Dorsolateral prefrontal cortex (tissue), 120 donors: ENCODE measurements at regions of chr1 and their contacts with region 1.

Region 1: GRCh38 chr1:119870917-119871596 is 25.3 kb downstream of the ADAM30 start:
- DNase-seq: peak; percentile 38 to 89 (median 78)
- H3K4me3 ChIP-seq: peak overlapping the region in 55 of 59 donors; percentile 7 to 66 (median 44)
- H3K27ac ChIP-seq: peak overlapping the region in 3 of 59 donors; percentile 35 to 59 (median 44)
- H3K27me3 ChIP-seq: no peaks in the 10 kb centered on the region
- CTCF ChIP-seq: peak; percentile 51 to 97 (median 88)

Region 2: DNA sequence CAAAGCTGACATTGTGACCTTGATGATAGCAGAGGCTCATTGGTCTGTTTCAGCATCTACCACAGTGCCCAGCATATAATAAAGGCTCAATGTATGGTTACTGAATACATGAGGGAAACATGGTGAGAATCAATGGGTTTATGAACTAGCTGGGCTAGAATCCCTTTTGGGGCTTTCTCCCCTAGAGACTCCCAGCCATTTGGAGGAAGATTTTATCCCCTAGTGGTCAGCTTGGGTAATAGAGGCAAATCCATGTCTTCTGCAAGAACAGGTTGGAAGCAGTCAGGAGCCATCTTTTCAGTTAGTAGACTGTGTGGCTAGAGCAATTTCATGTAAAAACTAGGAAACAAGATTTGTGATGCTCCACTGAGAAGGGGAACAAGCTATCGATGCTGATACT is 44.0 kb before region 1 on chr1:
- intact Hi-C with region 1: no loop called
- DNase-seq: no peak
- H3K4me3 ChIP-seq: no peak overlapping the region
- H3K27ac ChIP-seq: no peak overlapping the region
- H3K27me3 ChIP-seq: peaks cover 0 to 13% (median 0%) of the 10 kb centered on the region in 45 donors
- CTCF ChIP-seq: peak in 13 of 56 donors; percentile 10 to 35 (median 15)

Region 3: GRCh38 chr1:119968068-119968492 is 97.0 kb after region 1 on chr1:
- intact Hi-C with region 1: loop called in 1 of 2 experiments (anchors 10 kb)
- DNase-seq: peak in 5 of 10 donors; percentile 28 to 61 (median 47)
- H3K4me3 ChIP-seq: no peak overlapping the region
- H3K27ac ChIP-seq: no peak overlapping the region
- H3K27me3 ChIP-seq: no peaks in the 10 kb centered on the region
- CTCF ChIP-seq: peak; percentile 23 to 81 (median 68)